ENCODE measurements at regions of chr1 and their contacts with region 1.

Region 1: GRCh38 chr1:28642847-28643635 is at the start of gene TAF12:
- DNase-seq: peak; percentile 90 to 98 (median 94)
- ATAC-seq: peak; percentile 89
- H3K4me3 ChIP-seq: peak within 1 kb of the TSS; percentile 79
- H3K27ac ChIP-seq: peak within 1 kb of the TSS; percentile 95
- H3K4me1 ChIP-seq: peaks cover 36 to 39% of the 10 kb centered on the region in 2 experiments; a peak in 4 of 5 replicates
- H3K27me3 ChIP-seq: no peaks in the 10 kb centered on the region
- CTCF ChIP-seq: peak; percentile 75 to 92 (median 92)
- EP300 ChIP-seq: peak; percentile 27
- POLR2A ChIP-seq: peak; percentile 99
- RAD21 ChIP-seq: peak; percentile 81 to 83
- polyA plus RNA-seq, gene TAF12: 77.8 to 89.0 TPM

Region 2: GRCh38 chr1:28235755-28236655 is 407.0 kb before region 1 on chr1 and contains the start of gene ATP5IF1:
- CTCF ChIA-PET with region 1: no interaction called
- POLR2A ChIA-PET with region 1: interaction called, 6 read pairs
- in situ Hi-C with region 1: no loop called
- intact Hi-C with region 1: loop called (anchors 10 kb)
- DNase-seq: peak; percentile 99 to 100 (median 99)
- ATAC-seq: peak; percentile 93
- H3K4me3 ChIP-seq: peak within 1 kb of the TSS; percentile 67
- H3K27ac ChIP-seq: peak within 1 kb of the TSS; percentile 71
- H3K4me1 ChIP-seq: peaks cover 19 to 29% of the 10 kb centered on the region in 2 experiments
- H3K27me3 ChIP-seq: no peaks in the 10 kb centered on the region
- CTCF ChIP-seq: no peak
- EP300 ChIP-seq: 0 out of 2 replicates have a peak, but pooled peaks have one; percentile 20
- POLR2A ChIP-seq: peak; percentile 98
- RAD21 ChIP-seq: no peak
- polyA plus RNA-seq, gene ATP5IF1: 292 to 545 TPM

Region 3: GRCh38 chr1:28602536-28603439 is 40.3 kb before region 1 on chr1:
- CTCF ChIA-PET with region 1: interaction called, 4 read pairs
- POLR2A ChIA-PET with region 1: interaction called, 12 read pairs
- in situ Hi-C with region 1: no loop called
- intact Hi-C with region 1: no loop called
- DNase-seq: peak; percentile 67 to 86 (median 73)
- ATAC-seq: peak; percentile 91
- H3K4me3 ChIP-seq: no peak overlapping the region
- H3K27ac ChIP-seq: no peak overlapping the region
- H3K4me1 ChIP-seq: no peaks in the 10 kb centered on the region
- H3K27me3 ChIP-seq: no peaks in the 10 kb centered on the region
- CTCF ChIP-seq: peak; percentile 82 to 94 (median 86)
- EP300 ChIP-seq: no peak
- POLR2A ChIP-seq: no peak
- RAD21 ChIP-seq: peak; percentile 92 to 97

Region 4: DNA sequence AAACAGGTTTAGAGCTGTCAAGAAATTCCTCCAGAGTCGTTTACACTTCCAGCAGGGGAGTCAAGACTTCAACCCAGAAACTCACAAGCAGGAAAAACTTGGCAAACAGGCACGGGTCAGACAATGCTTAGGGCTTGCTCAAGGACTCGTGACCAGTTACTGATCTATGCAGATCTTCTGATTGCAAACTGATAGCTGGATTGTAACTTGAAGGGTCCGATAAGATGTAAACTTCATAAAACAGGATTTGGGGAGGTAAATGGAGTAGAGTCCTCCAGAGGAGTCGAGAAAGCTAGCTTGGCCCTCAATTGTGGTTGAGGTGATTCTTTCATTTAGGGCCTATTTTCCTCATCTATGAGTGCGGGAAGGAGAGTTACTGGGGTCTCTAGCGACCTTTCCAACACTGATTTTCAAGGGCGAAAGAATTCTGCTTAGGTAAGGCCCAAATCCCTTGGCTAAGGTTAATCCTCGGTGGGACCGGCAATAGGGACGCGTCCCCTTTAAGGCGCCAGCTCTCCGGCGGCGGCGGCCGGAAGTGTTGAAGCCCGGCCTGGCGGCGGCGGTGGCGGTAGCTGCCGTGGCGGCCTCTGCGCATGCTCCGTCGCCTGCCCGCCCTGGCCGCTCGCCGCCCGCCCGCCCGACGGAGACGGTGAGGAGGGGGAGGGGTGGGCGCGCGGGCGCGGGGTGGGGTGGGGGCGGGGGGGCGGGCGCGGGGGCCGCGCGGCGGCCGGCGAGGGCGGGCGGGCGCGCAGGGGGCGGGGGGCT is 25.3 kb after region 1 on chr1 and contains the start of gene GMEB1:
- CTCF ChIA-PET with region 1: no interaction called
- POLR2A ChIA-PET with region 1: interaction called, 240 read pairs
- in situ Hi-C with region 1: no loop called
- intact Hi-C with region 1: loop called (anchors 2 kb)
- DNase-seq: peak; percentile 95 to 100 (median 98)
- ATAC-seq: peak; percentile 91
- H3K4me3 ChIP-seq: peak within 1 kb of the TSS; percentile 98
- H3K27ac ChIP-seq: peak within 1 kb of the TSS; percentile 95
- H3K4me1 ChIP-seq: peaks cover 3 to 28% of the 10 kb centered on the region in 2 experiments; a peak in 4 of 5 replicates
- H3K27me3 ChIP-seq: no peaks in the 10 kb centered on the region
- CTCF ChIP-seq: peak in 1 of 3 experiments; percentile 9; a peak in 1 of 6 replicates
- EP300 ChIP-seq: no peak
- POLR2A ChIP-seq: peak; percentile 62; the same call in 1 of the 2 replicates
- RAD21 ChIP-seq: no peak
- polyA plus RNA-seq, gene GMEB1: 8.5 TPM

Region 5: GRCh38 chr1:28877132-28877781 is 234.2 kb after region 1 on chr1:
- CTCF ChIA-PET with region 1: interaction called, 4 read pairs
- POLR2A ChIA-PET with region 1: interaction called, 57 read pairs
- in situ Hi-C with region 1: no loop called
- intact Hi-C with region 1: loop called (anchors 1 kb)
- DNase-seq: peak; percentile 81 to 92 (median 82)
- ATAC-seq: peak; percentile 85
- H3K4me3 ChIP-seq: no peak overlapping the region
- H3K27ac ChIP-seq: no peak overlapping the region
- H3K4me1 ChIP-seq: peaks cover 21 to 22% of the 10 kb centered on the region in 2 experiments
- H3K27me3 ChIP-seq: no peaks in the 10 kb centered on the region
- CTCF ChIP-seq: peak; percentile 94 to 99 (median 97)
- EP300 ChIP-seq: no peak
- POLR2A ChIP-seq: no peak
- RAD21 ChIP-seq: peak; percentile 95 to 98